Activated CD8-positive, alpha-beta T cell treated with anti-CD3 and anti-CD28 coated beads for 36 hours (primary cell): ENCODE measurements at regions of chr2 and their contacts with region 1.

Region 1: DNA sequence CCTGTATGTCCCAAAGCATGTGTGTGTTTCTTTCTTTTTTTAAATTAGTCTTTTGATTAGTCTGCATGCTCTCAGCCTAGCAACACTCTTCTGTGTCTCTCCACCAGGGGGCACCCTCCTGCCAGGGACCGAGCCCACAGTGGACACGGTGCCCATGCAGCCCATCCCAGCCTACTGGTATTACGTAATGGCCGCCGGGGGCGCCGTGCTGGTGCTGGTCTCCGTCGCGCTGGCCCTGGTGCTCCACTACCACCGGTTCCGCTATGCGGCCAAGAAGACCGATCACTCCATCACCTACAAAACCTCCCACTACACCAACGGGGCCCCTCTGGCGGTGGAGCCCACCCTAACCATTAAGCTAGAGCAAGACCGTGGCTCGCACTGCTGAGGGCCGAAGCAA is 93.8 kb downstream of the NRP2 start:
- DNase-seq: peak; percentile 68
- ATAC-seq: no peak
- H3K4me3 Mint-ChIP-seq: no peak overlapping the region
- H3K27ac Mint-ChIP-seq: no peak overlapping the region
- H3K4me1 Mint-ChIP-seq: peaks cover 6% of the 10 kb centered on the region
- H3K27me3 Mint-ChIP-seq: peaks cover 11% of the 10 kb centered on the region
- CTCF ChIP-seq: peak; percentile 56

Region 2: DNA sequence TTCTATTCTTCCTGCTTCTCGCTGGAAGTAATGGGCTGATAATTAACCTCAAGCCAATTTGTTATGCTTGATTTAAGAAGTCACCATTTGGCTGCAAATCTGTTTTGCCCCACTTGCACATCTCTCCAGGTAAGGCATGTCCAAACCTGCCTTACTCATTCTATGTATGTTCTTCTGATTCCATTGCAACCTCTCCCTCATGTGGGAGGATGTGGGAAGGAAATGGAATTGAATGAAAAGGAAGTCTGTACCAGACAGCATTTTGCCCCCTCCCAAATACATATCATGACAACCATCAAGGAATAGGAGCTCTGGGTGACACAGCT is 37.9 kb after region 1 on chr2:
- CTCF ChIA-PET with region 1: interaction called, 8 read pairs
- POLR2A ChIA-PET with region 1: no interaction called
- intact Hi-C with region 1: loop called (anchors 5 kb)
- DNase-seq: no peak
- ATAC-seq: no peak
- H3K4me3 Mint-ChIP-seq: no peak overlapping the region
- H3K27ac Mint-ChIP-seq: no peak overlapping the region
- H3K4me1 Mint-ChIP-seq: no peaks in the 10 kb centered on the region
- H3K27me3 Mint-ChIP-seq: peaks cover 9% of the 10 kb centered on the region
- CTCF ChIP-seq: no peak

Region 3: GRCh38 chr2:205885492-205886099 is 109.5 kb after region 1 on chr2:
- CTCF ChIA-PET with region 1: interaction called, 20 read pairs
- POLR2A ChIA-PET with region 1: no interaction called
- intact Hi-C with region 1: no loop called
- DNase-seq: peak; percentile 81
- ATAC-seq: peak; percentile 53
- H3K4me3 Mint-ChIP-seq: no peak overlapping the region
- H3K27ac Mint-ChIP-seq: no peak overlapping the region
- H3K4me1 Mint-ChIP-seq: no peaks in the 10 kb centered on the region
- H3K27me3 Mint-ChIP-seq: peaks cover 10% of the 10 kb centered on the region
- CTCF ChIP-seq: peak; percentile 70

Region 4: GRCh38 chr2:205925373-205926337 is 149.5 kb after region 1 on chr2:
- CTCF ChIA-PET with region 1: interaction called, 11 read pairs
- POLR2A ChIA-PET with region 1: no interaction called
- intact Hi-C with region 1: no loop called
- DNase-seq: peak; percentile 78
- ATAC-seq: peak; percentile 96
- H3K4me3 Mint-ChIP-seq: no peak overlapping the region
- H3K27ac Mint-ChIP-seq: no peak overlapping the region
- H3K4me1 Mint-ChIP-seq: peaks cover 7% of the 10 kb centered on the region
- H3K27me3 Mint-ChIP-seq: peaks cover 42% of the 10 kb centered on the region
- CTCF ChIP-seq: peak; percentile 94

Region 5: GRCh38 chr2:205947621-205948495 is 171.7 kb after region 1 on chr2:
- CTCF ChIA-PET with region 1: interaction called, 5 read pairs
- POLR2A ChIA-PET with region 1: no interaction called
- intact Hi-C with region 1: loop called (anchors 5 kb)
- DNase-seq: peak; percentile 73
- ATAC-seq: peak; percentile 79
- H3K4me3 Mint-ChIP-seq: no peak overlapping the region
- H3K27ac Mint-ChIP-seq: no peak overlapping the region
- H3K4me1 Mint-ChIP-seq: no peaks in the 10 kb centered on the region
- H3K27me3 Mint-ChIP-seq: peaks cover 15% of the 10 kb centered on the region
- CTCF ChIP-seq: peak; percentile 75

Region 6: GRCh38 chr2:205989271-205990071 is 213.3 kb after region 1 on chr2:
- CTCF ChIA-PET with region 1: no interaction called
- POLR2A ChIA-PET with region 1: no interaction called
- intact Hi-C with region 1: no loop called
- DNase-seq: no peak
- ATAC-seq: no peak
- H3K4me3 Mint-ChIP-seq: no peak overlapping the region
- H3K27ac Mint-ChIP-seq: no peak overlapping the region
- H3K4me1 Mint-ChIP-seq: no peaks in the 10 kb centered on the region
- H3K27me3 Mint-ChIP-seq: no peaks in the 10 kb centered on the region
- CTCF ChIP-seq: no peak